Activated B cell treated with CpG ODN at 0.5 μM for 24 hours (primary cell): ENCODE measurements at regions of chr13 and their contacts with region 1.

Region 1: DNA sequence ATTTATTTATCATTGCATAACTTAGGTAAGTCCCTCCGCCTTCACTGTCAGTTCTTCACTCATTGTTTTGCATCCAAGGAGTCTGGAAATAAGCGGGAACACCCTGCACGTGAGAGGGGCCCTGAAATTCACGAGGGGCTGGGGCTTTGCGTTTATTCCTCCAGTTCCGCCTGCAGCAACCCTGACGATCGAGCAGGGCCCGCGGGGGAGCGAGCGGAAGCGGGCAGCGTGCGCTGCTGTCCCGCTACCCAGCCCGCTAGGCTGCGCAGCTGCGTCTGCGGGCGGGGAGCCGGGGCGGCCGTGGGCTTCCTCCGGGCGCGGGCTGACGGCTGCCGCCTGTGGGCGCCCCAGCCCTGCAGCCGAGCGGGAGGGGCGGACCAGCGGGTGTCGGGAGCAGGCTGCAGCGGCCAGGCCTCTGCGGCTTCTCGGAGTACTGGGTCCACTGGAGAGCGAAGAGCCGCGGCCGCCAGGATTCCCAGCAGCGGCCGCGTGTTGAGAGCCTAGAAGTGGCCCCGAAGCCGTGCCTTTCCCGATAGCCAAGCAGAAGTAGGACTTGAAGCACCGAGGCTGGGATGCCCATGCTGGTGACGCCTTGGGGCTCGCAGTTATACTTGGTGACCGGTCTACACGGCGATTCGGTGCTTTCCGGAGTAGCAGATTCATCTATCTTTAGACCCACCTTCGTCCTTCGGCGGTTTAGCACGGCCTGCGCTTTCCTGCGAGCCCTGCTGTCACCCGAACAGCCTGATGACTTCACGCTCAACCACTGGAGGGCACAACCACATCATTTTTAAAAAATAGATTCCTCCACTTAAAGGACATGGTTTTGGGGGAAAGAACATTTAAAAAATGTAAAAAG is 32.9 kb upstream of the SACS start:
- DNase-seq: peak; percentile 51
- ATAC-seq: peak; percentile 88
- H3K4me3 Mint-ChIP-seq: peak overlapping the region; percentile 79
- H3K27ac Mint-ChIP-seq: no peak overlapping the region
- H3K4me1 Mint-ChIP-seq: peaks cover 8% of the 10 kb centered on the region
- H3K27me3 Mint-ChIP-seq: peaks cover 19% of the 10 kb centered on the region
- CTCF ChIP-seq: no peak

Region 2: DNA sequence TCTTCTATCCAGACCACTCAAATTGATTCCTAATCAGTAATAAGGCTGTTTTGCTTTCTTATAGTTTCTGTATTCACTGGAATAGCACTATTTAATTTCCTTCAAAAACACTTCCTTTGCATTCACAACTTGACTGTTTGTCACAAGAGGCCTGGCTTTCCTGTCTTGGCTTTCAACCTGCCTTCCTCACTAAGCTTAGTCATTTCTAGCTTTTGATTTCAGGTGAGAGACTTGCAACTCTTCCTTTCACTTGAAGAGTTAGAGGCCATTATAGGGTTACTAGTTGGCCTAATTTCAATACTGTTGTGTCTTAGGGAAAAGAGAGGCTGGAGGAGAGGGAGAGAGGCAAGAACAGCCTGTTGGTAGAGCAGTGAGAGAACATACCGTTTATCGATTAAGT is 79.8 kb before region 1 on chr13:
- CTCF ChIA-PET with region 1: no interaction called
- POLR2A ChIA-PET with region 1: no interaction called
- intact Hi-C with region 1: no loop called
- DNase-seq: no peak
- ATAC-seq: no peak
- H3K4me3 Mint-ChIP-seq: no peak overlapping the region
- H3K27ac Mint-ChIP-seq: no peak overlapping the region
- H3K4me1 Mint-ChIP-seq: peaks cover 23% of the 10 kb centered on the region
- H3K27me3 Mint-ChIP-seq: no peaks in the 10 kb centered on the region
- CTCF ChIP-seq: no peak

Region 3: DNA sequence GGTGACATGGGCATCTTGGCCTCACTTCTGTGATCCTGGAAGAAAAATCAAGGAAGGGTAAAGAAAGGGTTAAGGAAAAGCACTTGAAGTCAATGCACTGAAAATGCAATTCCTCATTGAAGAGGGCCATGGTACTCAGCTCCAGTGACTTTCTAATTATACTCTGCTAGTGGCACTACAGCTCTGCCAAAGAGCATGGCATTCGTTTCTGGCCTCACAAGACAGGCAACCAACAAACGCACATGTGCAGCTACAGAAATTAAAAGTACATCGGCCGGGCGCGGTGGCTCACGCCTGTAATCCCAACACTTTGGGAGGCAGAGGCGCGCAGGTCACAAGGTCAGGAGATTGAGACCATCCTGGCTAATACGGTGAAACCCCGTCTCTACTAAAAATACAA is 54.7 kb before region 1 on chr13:
- CTCF ChIA-PET with region 1: no interaction called
- POLR2A ChIA-PET with region 1: no interaction called
- intact Hi-C with region 1: loop called (anchors 5 kb)
- DNase-seq: no peak
- ATAC-seq: no peak
- H3K4me3 Mint-ChIP-seq: no peak overlapping the region
- H3K27ac Mint-ChIP-seq: no peak overlapping the region
- H3K4me1 Mint-ChIP-seq: peaks cover 2% of the 10 kb centered on the region
- H3K27me3 Mint-ChIP-seq: peaks cover 9% of the 10 kb centered on the region
- CTCF ChIP-seq: no peak

Region 4: DNA sequence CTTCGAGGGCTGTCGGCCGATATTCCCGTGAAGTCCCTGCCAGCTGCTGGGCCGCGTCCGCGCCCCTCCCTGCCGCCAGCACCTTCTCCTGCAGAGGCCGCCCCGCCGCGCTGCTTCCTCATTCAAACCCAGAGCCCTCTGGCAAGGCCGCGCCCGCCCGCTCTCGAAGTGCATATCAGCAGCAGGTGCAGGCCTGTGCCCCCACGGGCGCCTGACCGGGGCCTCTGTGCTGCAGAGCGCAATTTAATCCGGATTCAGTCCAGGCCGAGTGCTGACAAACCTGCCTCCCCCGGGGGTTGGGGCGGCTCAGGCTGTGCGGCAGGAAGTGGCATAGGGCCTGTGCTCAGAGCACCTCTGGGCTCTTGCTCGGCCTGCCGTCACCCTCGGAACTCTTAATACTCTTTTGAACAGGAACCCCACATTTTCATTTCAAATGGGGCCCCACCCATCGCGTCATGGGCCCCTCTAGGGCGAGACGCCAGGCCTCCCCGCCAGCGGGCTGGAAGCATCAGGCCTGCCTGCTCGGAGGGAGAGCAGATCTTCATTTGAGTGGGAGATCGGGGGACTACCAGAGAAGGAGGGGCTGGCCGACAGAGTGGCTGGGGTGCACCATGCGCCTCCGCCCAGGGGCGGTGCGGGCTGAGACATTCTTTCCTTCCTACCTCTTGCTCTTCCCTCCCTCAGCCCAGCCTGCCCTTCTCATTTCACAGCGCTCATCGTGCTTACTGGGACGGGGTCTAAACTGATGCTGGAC is 229.5 kb after region 1 on chr13:
- CTCF ChIA-PET with region 1: no interaction called
- POLR2A ChIA-PET with region 1: no interaction called
- intact Hi-C with region 1: loop called (anchors 10 kb)
- DNase-seq: peak; percentile 65
- ATAC-seq: peak; percentile 98
- H3K4me3 Mint-ChIP-seq: peak overlapping the region; percentile 77
- H3K27ac Mint-ChIP-seq: peak overlapping the region; percentile 93
- H3K4me1 Mint-ChIP-seq: peaks cover 17% of the 10 kb centered on the region
- H3K27me3 Mint-ChIP-seq: peaks cover 5% of the 10 kb centered on the region
- CTCF ChIP-seq: no peak

Region 5: DNA sequence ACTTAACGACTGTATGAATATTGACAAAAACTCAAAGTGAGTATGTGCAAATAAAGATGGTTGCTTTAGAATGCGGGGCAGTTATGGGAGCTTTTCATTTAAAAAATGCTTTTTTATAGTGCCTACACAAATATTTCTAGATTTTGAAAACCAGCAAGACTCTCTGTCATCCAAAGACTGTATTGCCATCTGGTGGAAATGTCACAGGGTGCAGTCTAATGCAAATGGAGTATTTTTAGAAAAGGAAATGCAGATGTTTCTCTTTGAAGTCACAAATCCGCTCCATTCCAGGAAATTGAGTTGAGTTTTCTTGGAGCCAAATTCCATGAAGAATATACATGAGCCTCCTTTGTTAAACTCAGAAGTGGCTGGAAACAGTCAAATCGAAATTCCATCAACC is 433.2 kb after region 1 on chr13:
- CTCF ChIA-PET with region 1: interaction called, 5 read pairs
- POLR2A ChIA-PET with region 1: no interaction called
- intact Hi-C with region 1: loop called (anchors 1 kb)
- DNase-seq: no peak
- ATAC-seq: peak; percentile 52
- H3K4me3 Mint-ChIP-seq: no peak overlapping the region
- H3K27ac Mint-ChIP-seq: no peak overlapping the region
- H3K4me1 Mint-ChIP-seq: peaks cover 4% of the 10 kb centered on the region
- H3K27me3 Mint-ChIP-seq: peaks cover 20% of the 10 kb centered on the region
- CTCF ChIP-seq: no peak